B cell (primary cell): ENCODE measurements at regions of chr11 and their contacts with region 1.

Region 1: GRCh38 chr11:74449369-74449931 is 17.9 kb downstream of the KCNE3 start:
- DNase-seq: peak; percentile 84
- ATAC-seq: peak; percentile 91
- H3K4me3 ChIP-seq: peak overlapping the region in 2 of 5 experiments; percentile 10 to 34
- H3K4me3 Mint-ChIP-seq: peak overlapping the region; percentile 78
- H3K27ac ChIP-seq: no peak overlapping the region
- H3K27ac Mint-ChIP-seq: peak overlapping the region; percentile 58
- H3K4me1 ChIP-seq: peaks cover 5 to 8% of the 10 kb centered on the region in 2 donors
- H3K4me1 Mint-ChIP-seq: peaks cover 5% of the 10 kb centered on the region
- H3K27me3 ChIP-seq: peaks cover 0 to 8% (median 2%) of the 10 kb centered on the region in 4 experiments
- H3K27me3 Mint-ChIP-seq: peaks cover 31% of the 10 kb centered on the region
- CTCF ChIP-seq: peak; percentile 82

Region 2: DNA sequence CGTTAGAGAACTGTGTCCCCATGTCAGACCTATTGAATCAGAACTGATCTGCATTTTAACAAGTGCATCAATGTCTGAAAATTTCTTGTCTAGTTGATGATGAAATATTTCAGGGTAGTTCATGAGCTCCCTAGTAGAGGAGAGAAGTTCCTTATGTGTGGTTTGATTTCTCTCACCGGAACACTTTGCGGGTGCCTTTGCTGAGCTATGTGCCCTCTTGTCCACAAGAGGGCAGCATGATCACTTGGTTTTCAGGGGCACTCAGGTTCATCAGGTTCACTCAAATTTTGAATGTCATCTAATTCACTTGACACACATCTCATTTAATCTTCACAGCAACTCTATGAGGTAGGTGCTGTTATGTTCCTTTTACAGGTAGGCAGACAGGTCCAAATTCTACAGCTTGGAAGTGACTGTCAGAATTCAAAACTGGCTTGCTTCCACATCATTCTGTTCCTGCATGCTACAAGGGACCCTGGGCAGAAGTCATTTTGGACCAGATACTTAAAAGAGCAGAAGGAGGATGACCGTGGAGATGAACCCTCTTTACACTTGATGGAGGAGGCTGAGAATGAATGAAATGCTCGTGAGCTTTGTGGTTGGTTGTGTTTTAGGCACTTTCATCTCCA is 193.6 kb before region 1 on chr11:
- CTCF ChIA-PET with region 1: interaction called, 83 read pairs
- POLR2A ChIA-PET with region 1: no interaction called
- intact Hi-C with region 1: no loop called
- DNase-seq: peak; percentile 72
- ATAC-seq: peak; percentile 51
- H3K4me3 ChIP-seq: no peak overlapping the region
- H3K4me3 Mint-ChIP-seq: no peak overlapping the region
- H3K27ac ChIP-seq: no peak overlapping the region
- H3K27ac Mint-ChIP-seq: no peak overlapping the region
- H3K4me1 ChIP-seq: no peaks in the 10 kb centered on the region
- H3K4me1 Mint-ChIP-seq: no peaks in the 10 kb centered on the region
- H3K27me3 ChIP-seq: no peaks in the 10 kb centered on the region
- H3K27me3 Mint-ChIP-seq: no peaks in the 10 kb centered on the region
- CTCF ChIP-seq: peak; percentile 93

Region 3: GRCh38 chr11:74325649-74326645 is 123.5 kb before region 1 on chr11:
- CTCF ChIA-PET with region 1: no interaction called
- POLR2A ChIA-PET with region 1: no interaction called
- intact Hi-C with region 1: no loop called
- DNase-seq: no peak
- ATAC-seq: no peak
- H3K4me3 ChIP-seq: no peak overlapping the region
- H3K4me3 Mint-ChIP-seq: no peak overlapping the region
- H3K27ac ChIP-seq: no peak overlapping the region
- H3K27ac Mint-ChIP-seq: no peak overlapping the region
- H3K4me1 ChIP-seq: peaks cover 0 to 4% of the 10 kb centered on the region in 2 donors
- H3K4me1 Mint-ChIP-seq: peaks cover 5% of the 10 kb centered on the region
- H3K27me3 ChIP-seq: peaks cover 0 to 4% (median 0%) of the 10 kb centered on the region in 4 experiments
- H3K27me3 Mint-ChIP-seq: peaks cover 12% of the 10 kb centered on the region
- CTCF ChIP-seq: no peak

Region 4: GRCh38 chr11:74398244-74399159 is 50.9 kb before region 1 on chr11 and contains the start of gene PGM2L1:
- CTCF ChIA-PET with region 1: interaction called, 325 read pairs
- POLR2A ChIA-PET with region 1: no interaction called
- intact Hi-C with region 1: no loop called
- DNase-seq: peak; percentile 98
- ATAC-seq: peak; percentile 86
- H3K4me3 ChIP-seq: peak within 1 kb of the TSS; percentile 58 to 94 (median 89)
- H3K4me3 Mint-ChIP-seq: peak within 1 kb of the TSS; percentile 95
- H3K27ac ChIP-seq: peak within 1 kb of the TSS; percentile 66 to 87
- H3K27ac Mint-ChIP-seq: peak within 1 kb of the TSS; percentile 98
- H3K4me1 ChIP-seq: peaks cover 10% of the 10 kb centered on the region in 2 donors
- H3K4me1 Mint-ChIP-seq: peaks cover 14% of the 10 kb centered on the region
- H3K27me3 ChIP-seq: no peaks in the 10 kb centered on the region
- H3K27me3 Mint-ChIP-seq: no peaks in the 10 kb centered on the region
- CTCF ChIP-seq: no peak
- total RNA-seq, gene PGM2L1: 8.4 and 12.6 TPM in 2 replicates

Region 5: DNA sequence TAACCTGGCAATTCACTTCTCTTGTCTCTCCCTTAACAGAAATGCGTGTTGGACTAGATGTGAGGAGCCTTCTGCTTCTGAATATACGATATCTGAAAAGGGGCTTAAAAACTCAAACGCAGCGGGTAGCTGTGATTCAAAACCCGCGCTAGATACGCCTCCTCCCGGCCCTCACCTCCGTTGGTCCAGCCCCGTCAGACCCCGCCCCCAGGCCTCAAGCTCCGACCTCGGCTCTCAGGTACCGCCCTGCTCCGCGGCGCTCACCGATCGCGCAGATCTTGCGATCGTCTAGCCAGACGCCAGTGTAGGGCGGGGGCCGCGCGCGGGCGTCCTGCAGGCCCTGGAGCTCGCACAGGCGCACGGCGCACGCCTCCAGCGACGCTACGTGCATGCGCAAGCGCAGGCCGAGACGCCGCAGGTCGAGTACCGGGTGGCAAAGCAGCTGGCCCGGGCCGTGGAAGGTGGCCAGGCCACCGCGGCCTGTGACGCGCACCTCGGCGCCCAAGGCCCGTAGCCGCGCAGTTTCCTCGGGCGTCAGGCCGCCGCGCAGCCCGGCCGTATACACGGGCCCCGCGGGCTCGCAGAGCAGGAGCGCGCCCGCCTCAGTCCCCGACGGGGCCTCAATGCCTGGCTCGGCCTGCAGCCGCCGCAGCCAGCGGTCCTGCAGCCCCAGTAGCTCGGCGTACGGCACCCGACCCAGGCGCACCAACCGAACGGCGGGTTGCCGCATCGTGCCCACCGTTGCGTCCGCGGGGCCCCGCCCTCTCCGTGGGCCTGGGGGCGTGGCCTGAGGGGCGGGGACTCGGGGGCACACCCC is 43.7 kb after region 1 on chr11 and contains the start of gene LIPT2:
- CTCF ChIA-PET with region 1: interaction called, 17 read pairs
- POLR2A ChIA-PET with region 1: no interaction called
- intact Hi-C with region 1: no loop called
- DNase-seq: peak; percentile 98
- ATAC-seq: peak; percentile 94
- H3K4me3 ChIP-seq: peak within 1 kb of the TSS; percentile 32 to 79 (median 75)
- H3K4me3 Mint-ChIP-seq: peak within 1 kb of the TSS; percentile 90
- H3K27ac ChIP-seq: peak within 1 kb of the TSS; percentile 47 to 78
- H3K27ac Mint-ChIP-seq: peak within 1 kb of the TSS; percentile 94
- H3K4me1 ChIP-seq: peaks cover 7 to 14% of the 10 kb centered on the region in 2 donors
- H3K4me1 Mint-ChIP-seq: peaks cover 13% of the 10 kb centered on the region
- H3K27me3 ChIP-seq: no peaks in the 10 kb centered on the region
- H3K27me3 Mint-ChIP-seq: no peaks in the 10 kb centered on the region
- CTCF ChIP-seq: no peak
- total RNA-seq, gene LIPT2: 6.5 and 20.2 TPM in 2 replicates

Region 6: DNA sequence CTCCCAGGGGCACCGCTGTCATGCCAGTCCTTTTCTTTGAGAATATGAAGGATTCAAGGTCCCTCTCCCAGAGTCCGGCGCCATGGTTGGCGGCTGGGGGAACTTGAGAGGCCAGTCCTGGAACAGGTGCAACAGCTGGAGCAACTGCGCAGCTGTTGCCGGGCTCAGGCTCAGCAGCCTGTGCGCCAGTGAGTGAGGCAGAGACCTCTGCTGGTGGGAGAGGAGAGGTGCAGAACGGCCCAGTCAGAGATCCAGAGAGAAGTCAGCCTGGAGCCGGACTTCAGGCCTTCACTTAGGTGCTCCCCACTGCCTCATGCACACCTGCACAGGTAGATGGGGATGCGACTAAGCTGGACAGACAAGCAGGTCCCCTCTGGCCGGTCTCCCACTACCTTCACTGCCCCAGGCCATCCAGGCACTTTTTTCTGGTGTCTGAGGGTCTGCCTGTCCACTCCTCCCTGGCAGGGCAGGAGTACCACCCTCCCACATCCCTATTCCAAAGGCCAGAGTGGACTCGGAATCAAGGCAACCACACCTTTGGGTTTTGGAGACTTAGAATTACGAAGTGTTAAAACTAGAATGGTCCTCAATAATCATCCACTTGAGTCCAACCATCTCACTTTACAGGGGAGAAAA is 277.2 kb after region 1 on chr11:
- CTCF ChIA-PET with region 1: interaction called, 9 read pairs
- POLR2A ChIA-PET with region 1: no interaction called
- intact Hi-C with region 1: loop called (anchors 5 kb)
- DNase-seq: peak; percentile 71
- ATAC-seq: peak; percentile 94
- H3K4me3 ChIP-seq: no peak overlapping the region
- H3K4me3 Mint-ChIP-seq: no peak overlapping the region
- H3K27ac ChIP-seq: no peak overlapping the region
- H3K27ac Mint-ChIP-seq: no peak overlapping the region
- H3K4me1 ChIP-seq: peaks cover 4% of the 10 kb centered on the region in 2 donors
- H3K4me1 Mint-ChIP-seq: peaks cover 5% of the 10 kb centered on the region
- H3K27me3 ChIP-seq: peaks cover 0 to 30% (median 9%) of the 10 kb centered on the region in 4 experiments
- H3K27me3 Mint-ChIP-seq: peaks cover 37% of the 10 kb centered on the region
- CTCF ChIP-seq: peak; percentile 88

Region 7: DNA sequence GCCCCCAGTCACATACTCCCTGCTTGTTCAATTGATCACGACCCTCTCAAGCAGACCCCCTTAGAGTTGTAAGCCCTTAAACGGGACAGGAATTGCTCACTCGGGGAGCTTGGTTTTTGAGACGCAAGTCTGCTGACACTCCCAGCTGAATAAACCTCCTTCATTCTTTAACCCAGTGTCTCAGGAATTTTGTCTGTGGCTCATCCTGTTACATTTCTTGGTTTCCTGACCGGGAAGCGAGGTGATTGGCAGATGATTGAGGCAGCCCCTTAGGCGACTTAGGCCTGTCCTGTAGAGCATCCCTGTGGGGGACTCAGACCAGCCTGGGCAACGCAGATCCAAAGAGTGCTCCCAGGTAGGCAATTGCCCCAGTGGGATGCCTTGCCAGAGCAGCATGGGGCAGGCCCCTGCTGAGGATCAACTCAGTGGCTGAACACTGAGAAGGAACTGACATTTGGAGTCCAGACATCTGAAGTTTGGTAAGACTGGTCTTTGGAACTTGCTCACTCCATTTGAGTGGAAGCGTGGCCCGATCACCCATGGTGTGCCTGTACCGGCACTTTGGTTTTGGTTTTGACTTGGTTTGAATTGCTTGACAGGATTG is 590.8 kb after region 1 on chr11:
- CTCF ChIA-PET with region 1: no interaction called
- POLR2A ChIA-PET with region 1: no interaction called
- intact Hi-C with region 1: no loop called
- DNase-seq: no peak
- ATAC-seq: no peak
- H3K4me3 ChIP-seq: no peak overlapping the region
- H3K4me3 Mint-ChIP-seq: no peak overlapping the region
- H3K27ac ChIP-seq: no peak overlapping the region
- H3K27ac Mint-ChIP-seq: no peak overlapping the region
- H3K4me1 ChIP-seq: peaks cover 3 to 9% of the 10 kb centered on the region in 2 donors
- H3K4me1 Mint-ChIP-seq: peaks cover 9% of the 10 kb centered on the region
- H3K27me3 ChIP-seq: no peaks in the 10 kb centered on the region
- H3K27me3 Mint-ChIP-seq: peaks cover 6% of the 10 kb centered on the region
- CTCF ChIP-seq: no peak